Pancreas (tissue), 10 donors: ENCODE measurements at regions of chr12 and their contacts with region 1.

Region 1: DNA sequence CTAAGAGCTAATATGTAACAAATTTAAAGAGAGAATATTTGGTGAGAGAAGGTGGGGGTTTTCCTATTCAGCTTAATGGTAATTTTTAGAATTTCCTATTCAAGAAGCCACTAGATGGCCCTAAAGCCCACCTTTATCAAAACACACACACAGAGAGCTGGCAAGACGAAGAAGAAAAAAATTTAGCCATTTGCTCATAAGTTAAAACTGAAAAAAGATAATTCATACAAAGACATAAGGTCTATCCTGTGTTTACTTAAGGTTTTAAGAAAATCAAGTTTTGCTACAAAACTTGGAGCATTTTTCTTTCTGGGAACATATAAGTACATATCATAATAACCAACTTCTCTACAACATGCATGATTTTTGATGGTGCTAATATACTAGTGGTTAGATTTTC is 46.8 kb upstream of the PCED1B start:
- DNase-seq: no peak
- ATAC-seq: peak; percentile 78 to 89 (median 86)
- H3K4me3 ChIP-seq: no peak overlapping the region
- H3K27ac ChIP-seq: no peak overlapping the region
- H3K4me1 ChIP-seq: peaks cover 4 to 10% (median 5%) of the 10 kb centered on the region in 3 donors
- H3K27me3 ChIP-seq: no peaks in the 10 kb centered on the region
- CTCF ChIP-seq: peak in 2 of 4 donors; percentile 28 to 44

Region 2: DNA sequence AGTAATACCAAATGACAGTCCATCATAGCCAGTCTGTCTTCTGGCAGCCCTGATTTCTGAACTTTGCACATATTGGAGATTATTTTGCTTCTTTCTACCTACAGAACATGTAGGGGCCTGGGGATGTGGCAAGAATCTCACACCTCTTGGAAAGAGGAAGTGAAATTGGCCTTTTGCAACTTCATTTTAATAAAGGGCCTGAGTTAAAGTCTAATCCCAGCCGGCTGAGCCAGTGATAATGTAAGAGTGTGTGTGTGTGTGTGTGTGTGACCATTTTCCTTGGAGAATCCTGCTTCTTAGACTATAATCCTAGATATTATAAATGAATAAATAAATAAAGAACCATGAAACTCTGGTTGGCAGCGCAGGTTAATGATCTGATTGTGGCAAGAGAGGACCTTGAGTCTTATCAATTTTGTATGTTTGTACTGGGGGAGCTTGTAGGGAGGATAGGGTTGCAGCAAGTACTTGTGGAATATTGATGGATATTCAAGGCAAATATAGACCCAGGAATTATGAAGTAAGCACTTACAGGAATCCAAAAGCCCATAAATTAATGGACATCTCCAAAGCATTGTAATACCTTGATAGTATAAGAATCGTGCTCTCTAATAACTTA is 280.3 kb after region 1 on chr12:
- intact Hi-C with region 1: loop called in 1 of 3 experiments (anchors 5 kb)
- DNase-seq: peak in 2 of 6 donors; percentile 7 to 33
- ATAC-seq: peak; percentile 76 to 92 (median 86)
- H3K4me3 ChIP-seq: no peak overlapping the region
- H3K27ac ChIP-seq: peak overlapping the region in 2 of 4 donors; percentile 19 to 51
- H3K4me1 ChIP-seq: peaks cover 0 to 21% (median 20%) of the 10 kb centered on the region in 3 donors
- H3K27me3 ChIP-seq: no peaks in the 10 kb centered on the region
- CTCF ChIP-seq: no peak

Region 3: GRCh38 chr12:47686645-47687240 is 654.1 kb after region 1 on chr12:
- intact Hi-C with region 1: loop called in 1 of 3 experiments (anchors 10 kb)
- DNase-seq: no peak
- ATAC-seq: peak in 3 of 4 donors; percentile 67 to 77 (median 74)
- H3K4me3 ChIP-seq: no peak overlapping the region
- H3K27ac ChIP-seq: no peak overlapping the region
- H3K4me1 ChIP-seq: no peaks in the 10 kb centered on the region
- H3K27me3 ChIP-seq: no peaks in the 10 kb centered on the region
- CTCF ChIP-seq: peak in 1 of 4 donors; percentile 20